GM10248 (cell line): ENCODE measurements at regions of chr12 and their contacts with region 1.

Region 1: GRCh38 chr12:100154474-100155247 is 12.0 kb upstream of the BLTP3B start:
- DNase-seq: peak; percentile 78
- CTCF ChIP-seq: peak; percentile 84

Region 2: GRCh38 chr12:99946131-99946530 is 208.5 kb before region 1 on chr12:
- CTCF ChIA-PET with region 1: no interaction called
- POLR2A ChIA-PET with region 1: no interaction called
- DNase-seq: no peak
- CTCF ChIP-seq: no peak

Region 3: DNA sequence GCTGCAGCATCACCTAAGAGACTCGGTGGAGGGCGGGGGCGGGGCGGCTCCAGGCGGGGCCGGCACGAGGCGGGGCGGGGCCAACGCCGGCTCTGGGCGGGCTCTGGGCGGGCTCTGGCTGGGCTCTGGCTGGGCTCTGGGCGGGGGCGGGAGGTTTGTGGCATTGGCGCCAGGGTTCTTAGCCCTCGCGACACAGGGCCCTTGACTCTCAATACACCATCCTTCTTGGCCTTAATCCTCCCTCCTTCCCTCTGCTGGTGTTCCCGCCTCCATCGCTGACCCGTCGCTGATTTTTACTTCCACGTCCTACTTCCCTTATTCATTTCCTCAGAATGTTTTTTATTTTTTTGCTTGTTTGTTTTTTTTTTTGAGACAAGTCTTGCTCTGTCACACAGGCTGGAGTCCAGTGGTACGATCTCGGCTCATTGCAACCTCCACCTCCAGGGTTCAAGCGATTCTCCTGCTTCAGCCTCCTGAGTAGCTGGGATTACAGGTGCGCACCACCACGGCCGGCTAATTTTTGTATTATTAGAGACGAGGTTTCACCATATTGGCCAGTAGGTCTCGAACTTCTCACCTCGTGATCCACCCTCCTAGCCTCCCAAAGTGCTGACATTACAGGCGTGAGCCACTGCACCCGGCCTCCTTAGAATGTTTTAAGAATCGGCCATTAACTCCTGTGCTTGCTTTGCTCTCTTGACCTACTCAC is 11.7 kb before region 1 on chr12 and contains the start of gene BLTP3B:
- CTCF ChIA-PET with region 1: interaction called, 42 read pairs
- POLR2A ChIA-PET with region 1: no interaction called
- DNase-seq: peak; percentile 92
- CTCF ChIP-seq: no peak

Region 4: GRCh38 chr12:100170313-100170858 is 15.7 kb after region 1 on chr12:
- CTCF ChIA-PET with region 1: interaction called, 51 read pairs
- POLR2A ChIA-PET with region 1: no interaction called
- DNase-seq: no peak
- CTCF ChIP-seq: no peak

Region 5: GRCh38 chr12:100185361-100185894 is 30.8 kb after region 1 on chr12:
- CTCF ChIA-PET with region 1: interaction called, 14 read pairs
- POLR2A ChIA-PET with region 1: no interaction called
- DNase-seq: no peak
- CTCF ChIP-seq: no peak

Region 6: GRCh38 chr12:100593490-100593889 is 438.8 kb after region 1 on chr12:
- CTCF ChIA-PET with region 1: no interaction called
- POLR2A ChIA-PET with region 1: no interaction called
- DNase-seq: no peak
- CTCF ChIP-seq: no peak